AG04449 (cell line): ENCODE measurements at regions of chr17 and their contacts with region 1.

Region 1: DNA sequence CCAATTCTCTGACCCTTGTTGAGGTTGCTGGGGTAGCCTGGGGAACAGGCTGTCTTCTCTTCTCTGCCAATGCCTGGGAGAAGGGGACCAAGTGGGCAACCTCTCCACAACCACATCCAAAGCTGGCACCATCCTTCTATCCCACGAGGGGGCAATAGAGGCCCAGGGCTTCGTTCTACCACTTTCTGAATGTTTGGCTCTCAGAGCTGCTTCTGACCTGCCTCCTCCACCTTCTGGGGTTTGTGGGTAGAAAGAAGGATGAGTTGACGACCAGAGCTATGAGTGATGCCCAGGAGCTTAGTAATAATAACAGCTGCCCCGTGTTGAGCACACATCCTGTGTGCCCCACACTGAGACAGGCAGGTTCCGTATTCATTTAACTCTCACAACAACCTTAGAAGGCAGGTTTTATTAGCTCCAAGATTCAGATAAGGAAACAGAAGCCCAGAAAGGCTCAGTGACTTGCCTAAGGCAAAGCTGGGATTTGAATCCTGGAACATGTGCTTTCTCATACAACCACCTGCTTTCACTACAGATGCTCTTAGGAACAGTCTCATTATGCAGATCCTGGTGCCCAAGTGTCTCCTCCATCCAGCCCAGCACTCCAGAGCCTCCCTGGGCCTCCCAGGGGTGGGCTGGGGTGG is 11.1 kb downstream of the TSPOAP1 start:
- DNase-seq: peak; percentile 17
- H3K4me3 ChIP-seq: no peak overlapping the region
- CTCF ChIP-seq: peak; percentile 85

Region 2: DNA sequence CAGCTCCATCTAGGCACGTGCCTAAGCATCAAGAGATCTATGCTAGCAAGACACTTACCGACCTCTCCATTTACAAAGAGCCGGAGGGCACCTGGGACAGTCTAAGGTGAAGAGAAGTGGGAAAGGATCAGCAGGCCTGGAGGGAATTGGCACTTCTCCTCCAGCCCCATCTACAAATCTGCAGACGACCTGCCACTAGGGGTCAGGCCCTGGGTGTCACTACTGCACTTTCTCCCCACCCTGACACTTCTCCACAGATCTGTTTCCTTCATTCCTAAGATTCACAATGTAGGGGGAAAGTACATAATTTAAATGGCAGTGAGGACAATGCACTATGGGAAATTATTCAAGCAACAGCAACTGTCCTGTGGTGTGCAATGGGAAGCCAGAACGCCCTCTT is 106.6 kb before region 1 on chr17:
- CTCF ChIA-PET with region 1: no interaction called
- POLR2A ChIA-PET with region 1: no interaction called
- DNase-seq: no peak
- H3K4me3 ChIP-seq: no peak overlapping the region
- CTCF ChIP-seq: no peak

Region 3: GRCh38 chr17:58294034-58294433 is 23.5 kb before region 1 on chr17:
- CTCF ChIA-PET with region 1: no interaction called
- POLR2A ChIA-PET with region 1: no interaction called
- DNase-seq: no peak
- H3K4me3 ChIP-seq: no peak overlapping the region
- CTCF ChIP-seq: no peak

Region 4: DNA sequence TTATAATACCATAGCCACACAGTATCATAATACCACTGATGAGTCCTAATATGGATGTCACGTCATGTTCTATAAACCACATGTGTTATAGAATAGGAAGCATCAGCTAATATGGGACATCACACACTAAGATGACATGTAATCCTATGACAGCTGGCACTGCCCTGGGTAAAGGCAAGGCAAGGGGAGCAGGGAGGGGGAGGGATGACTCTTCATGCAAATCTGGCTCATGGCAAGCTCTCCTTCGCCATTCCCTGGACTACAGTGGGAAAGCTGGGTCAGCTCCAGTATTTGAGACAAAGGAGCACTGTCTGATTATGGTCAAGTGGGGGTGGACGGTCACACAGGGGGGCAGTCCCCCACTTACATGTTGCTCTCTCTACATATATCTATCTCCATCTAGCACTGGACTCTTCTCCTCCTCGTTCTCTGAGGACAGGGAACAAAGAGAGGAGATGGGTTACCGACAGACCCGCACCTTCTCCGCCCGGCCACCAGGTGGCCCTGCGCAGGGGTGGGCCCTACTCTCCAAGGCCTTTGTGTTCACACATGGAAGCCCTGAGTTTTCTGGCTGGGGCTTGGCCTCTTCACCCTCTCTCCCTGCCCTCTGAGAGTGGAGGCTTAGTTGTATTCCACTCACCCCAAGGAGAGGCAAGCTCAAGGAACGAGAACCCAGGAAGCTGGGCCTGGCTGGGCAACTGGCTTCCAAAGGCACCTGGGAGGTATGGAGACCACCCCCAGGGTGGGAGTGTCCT is 13.4 kb before region 1 on chr17:
- CTCF ChIA-PET with region 1: interaction called, 30 read pairs
- POLR2A ChIA-PET with region 1: no interaction called
- DNase-seq: no peak
- H3K4me3 ChIP-seq: no peak overlapping the region
- CTCF ChIP-seq: peak; percentile 85

Region 5: DNA sequence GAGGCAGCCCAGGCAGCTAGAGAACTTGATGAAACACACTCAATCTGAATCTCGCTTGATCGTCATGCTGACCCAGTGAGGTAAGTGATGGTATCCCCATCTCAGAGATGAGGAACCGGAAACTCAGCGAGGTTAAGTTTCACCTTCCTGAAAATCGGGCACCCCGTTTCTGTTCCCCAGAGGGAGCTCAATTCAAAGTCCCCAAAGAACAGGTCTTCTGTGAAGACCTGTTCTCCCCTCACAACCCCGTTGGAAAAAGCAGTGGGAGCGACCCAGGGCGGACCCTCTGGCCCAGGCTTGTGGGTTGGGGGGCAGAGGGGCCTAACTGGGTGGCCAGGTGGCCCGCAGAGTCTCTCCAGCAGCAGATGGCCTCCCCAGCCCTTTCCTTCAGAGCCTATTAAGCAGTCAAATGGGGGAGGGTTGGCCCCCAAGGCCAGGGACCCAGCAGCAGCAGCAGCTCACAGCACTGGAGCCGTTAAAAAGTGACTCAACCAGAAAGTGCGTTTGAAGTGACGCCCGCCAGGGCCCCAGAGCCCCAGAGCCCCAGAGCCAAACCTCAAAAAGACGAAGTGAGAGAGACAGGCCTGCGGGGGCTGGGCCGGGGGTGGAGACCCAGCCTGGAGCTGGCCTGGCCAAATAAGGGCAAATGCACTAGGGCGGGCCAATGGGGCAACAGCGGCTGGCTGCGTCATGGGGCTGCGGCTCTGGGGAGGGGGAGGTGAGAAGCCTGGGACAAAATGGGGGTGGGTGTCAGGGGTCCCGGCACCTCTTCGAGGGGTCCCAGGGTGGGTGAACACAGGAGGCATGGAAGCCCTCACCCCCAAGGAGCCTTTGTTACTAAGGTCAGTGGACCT is 20.3 kb after region 1 on chr17:
- CTCF ChIA-PET with region 1: interaction called, 10 read pairs
- POLR2A ChIA-PET with region 1: interaction called, 6 read pairs
- DNase-seq: peak; percentile 86
- H3K4me3 ChIP-seq: no peak overlapping the region
- CTCF ChIP-seq: no peak

Region 6: DNA sequence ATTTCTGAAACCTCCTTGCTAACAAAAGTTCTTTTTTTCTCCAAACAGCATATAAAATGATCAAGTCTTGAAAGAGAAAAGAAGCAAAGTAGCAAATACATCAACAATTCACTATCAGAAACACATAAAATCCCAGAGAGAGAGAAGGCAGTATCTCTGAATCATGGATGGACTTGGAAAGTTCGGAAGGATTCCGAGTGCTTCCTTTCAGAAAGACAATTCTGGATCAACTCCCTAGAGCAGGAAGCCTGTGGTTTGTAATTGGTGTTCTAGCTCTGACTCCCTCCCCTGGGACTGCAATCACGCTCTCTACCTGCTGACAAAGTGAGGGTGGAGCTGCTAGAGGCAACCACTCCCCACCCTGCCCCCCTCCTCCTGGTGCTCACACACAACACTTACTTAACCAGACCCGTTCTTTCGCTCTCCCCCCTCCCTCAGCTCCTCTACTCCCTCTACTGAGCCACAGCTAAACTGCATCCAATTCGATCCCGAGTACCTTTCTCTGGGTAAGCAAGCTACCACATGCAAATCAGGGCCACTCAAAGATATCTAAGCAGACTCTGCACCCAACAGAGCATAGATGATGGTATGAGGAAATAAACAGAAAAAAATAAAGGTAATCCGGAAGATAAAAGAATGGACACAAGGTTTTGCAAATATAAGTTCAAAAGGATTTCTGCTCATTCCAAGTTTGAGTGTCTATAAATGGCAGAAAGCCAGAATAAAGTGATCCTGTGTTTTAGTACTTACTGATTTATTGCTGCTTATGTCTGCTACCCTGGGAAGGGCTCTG is 100.0 kb after region 1 on chr17 and contains the start of gene RNF43:
- CTCF ChIA-PET with region 1: interaction called, 131 read pairs
- POLR2A ChIA-PET with region 1: no interaction called
- DNase-seq: peak; percentile 24
- H3K4me3 ChIP-seq: peak within 1 kb of the TSS; percentile 49
- CTCF ChIP-seq: peak; percentile 91

Region 7: GRCh38 chr17:58447039-58447975 is 129.8 kb after region 1 on chr17:
- CTCF ChIA-PET with region 1: interaction called, 138 read pairs
- POLR2A ChIA-PET with region 1: no interaction called
- DNase-seq: peak; percentile 24
- H3K4me3 ChIP-seq: no peak overlapping the region
- CTCF ChIP-seq: peak; percentile 82

Region 8: DNA sequence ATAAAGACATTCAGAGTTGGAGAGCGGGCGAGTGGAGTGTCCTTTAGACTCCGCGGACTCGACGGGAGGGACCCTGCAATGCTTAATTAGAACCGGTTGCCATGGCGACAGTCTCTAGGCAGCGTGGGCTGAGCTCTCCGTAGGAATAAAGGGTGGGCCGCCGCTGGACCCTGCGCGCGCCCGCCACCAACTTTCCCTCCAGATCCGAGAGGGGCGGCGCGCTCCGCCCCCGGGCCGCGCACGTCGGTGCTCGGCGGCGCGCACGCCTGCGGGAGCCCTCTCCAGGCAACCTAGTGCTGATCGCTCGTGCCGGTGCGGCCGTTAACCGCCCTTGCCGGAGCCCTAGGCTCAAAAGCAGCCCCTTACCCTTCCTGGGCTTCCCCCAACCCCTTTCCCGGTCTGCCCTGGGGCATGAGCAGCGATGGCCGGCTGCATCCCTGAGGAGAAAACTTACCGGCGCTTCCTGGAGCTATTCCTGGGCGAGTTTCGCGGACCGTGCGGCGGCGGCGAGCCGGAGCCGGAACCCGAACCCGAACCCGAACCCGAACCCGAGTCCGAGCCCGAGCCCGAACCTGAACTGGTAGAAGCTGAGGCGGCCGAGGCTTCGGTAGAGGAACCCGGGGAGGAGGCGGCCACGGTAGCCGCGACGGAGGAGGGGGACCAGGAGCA is 438.2 kb after region 1 on chr17 and contains the start of gene PPM1E:
- CTCF ChIA-PET with region 1: no interaction called
- POLR2A ChIA-PET with region 1: no interaction called
- DNase-seq: no peak
- H3K4me3 ChIP-seq: peak within 1 kb of the TSS; percentile 60
- CTCF ChIP-seq: no peak